RWPE1 (cell line): ENCODE measurements at regions of chr4 and their contacts with region 1.

Region 1: DNA sequence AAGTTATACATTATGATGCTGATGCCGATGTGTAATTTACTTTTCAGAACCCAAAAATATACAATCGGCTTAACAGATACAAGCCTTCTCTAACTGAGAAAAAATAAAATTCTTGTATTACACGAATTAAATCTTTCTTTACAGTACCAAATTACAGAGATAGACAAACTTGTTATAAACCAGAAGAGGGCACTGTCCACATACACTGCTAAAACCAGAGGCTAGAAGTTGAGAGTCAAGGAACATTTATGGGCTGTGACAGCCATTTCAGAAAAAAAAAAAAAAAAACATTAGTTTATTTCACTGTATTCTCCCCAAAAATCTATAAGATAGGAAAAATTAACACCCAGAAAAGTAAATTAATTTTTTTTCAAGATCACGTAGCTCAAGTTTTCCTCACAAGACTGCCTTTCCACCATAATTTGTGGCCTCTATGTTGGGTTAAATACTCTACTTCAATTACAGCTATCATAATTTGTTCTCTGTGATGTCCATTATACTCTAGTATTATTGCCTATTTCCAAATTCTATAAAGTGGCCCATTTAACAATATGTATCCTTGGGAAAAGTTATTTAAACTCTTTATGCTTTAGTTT is 12.0 kb downstream of the EREG start:
- DNase-seq: peak; percentile 62
- H3K27ac ChIP-seq: no peak overlapping the region
- CTCF ChIP-seq: peak; percentile 80

Region 2: DNA sequence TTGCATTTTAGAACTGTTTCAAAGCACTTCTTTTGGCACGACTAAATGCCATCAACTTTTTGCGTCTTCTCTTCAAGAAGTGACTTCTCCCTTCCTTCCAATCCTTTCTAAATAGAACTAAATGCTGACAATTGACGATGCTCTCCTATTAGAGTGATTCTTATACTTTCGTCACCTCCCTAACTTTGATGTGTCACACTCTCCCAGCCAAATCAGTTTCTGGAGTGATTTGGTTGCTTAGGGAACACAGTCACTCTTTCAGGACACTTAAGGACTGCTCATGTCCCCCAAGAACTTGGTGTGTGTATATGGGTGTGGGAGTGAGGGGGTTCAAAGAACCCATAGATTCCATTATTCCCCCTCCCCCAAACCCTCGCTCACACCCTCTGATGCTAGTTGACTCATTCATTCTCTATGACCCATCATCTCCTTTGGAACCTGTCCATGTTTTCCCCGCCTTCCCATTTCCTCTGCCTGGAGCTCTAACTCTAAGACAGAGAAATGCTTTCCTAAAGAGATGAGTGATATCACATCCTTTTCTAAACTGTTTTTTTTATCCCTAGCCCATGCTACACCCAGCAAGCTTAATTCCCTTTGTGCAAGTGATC is 41.2 kb after region 1 on chr4:
- CTCF ChIA-PET with region 1: interaction called, 4 read pairs
- POLR2A ChIA-PET with region 1: interaction called, 16 read pairs
- DNase-seq: peak; percentile 82
- H3K27ac ChIP-seq: peak overlapping the region; percentile 22; the same call in 1 of the 2 replicates
- CTCF ChIP-seq: no peak

Region 3: DNA sequence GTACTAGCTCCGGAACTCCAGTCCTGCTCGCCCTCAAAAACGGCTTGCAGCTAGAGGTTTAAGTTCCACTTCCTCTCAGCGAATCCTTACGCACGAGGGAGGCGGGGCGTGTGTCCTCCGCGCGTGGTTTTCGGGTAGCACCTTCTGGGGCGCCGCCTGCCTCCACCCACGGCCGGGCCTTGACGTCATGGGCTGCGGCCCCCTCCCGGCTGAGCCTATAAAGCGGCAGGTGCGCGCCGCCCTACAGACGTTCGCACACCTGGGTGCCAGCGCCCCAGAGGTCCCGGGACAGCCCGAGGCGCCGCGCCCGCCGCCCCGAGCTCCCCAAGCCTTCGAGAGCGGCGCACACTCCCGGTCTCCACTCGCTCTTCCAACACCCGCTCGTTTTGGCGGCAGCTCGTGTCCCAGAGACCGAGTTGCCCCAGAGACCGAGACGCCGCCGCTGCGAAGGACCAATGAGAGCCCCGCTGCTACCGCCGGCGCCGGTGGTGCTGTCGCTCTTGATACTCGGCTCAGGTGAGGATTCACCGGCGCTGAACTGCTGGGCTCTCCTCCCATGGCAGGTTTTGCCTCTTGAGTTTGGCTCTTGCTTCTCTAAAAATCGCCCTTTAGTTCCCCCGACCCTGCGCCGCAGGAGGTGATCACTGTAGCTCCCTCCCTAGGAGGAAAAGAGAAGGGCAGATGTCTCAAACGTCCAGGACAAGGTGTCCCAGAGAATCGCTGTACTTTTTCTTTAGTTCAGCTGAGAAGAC is 68.1 kb after region 1 on chr4 and contains the start of gene AREG:
- CTCF ChIA-PET with region 1: interaction called, 17 read pairs
- POLR2A ChIA-PET with region 1: interaction called, 6 read pairs
- DNase-seq: peak; percentile 87
- H3K27ac ChIP-seq: peak within 1 kb of the TSS; percentile 96
- CTCF ChIP-seq: peak; percentile 70

Region 4: GRCh38 chr4:74539044-74539790 is 162.2 kb after region 1 on chr4:
- CTCF ChIA-PET with region 1: no interaction called
- POLR2A ChIA-PET with region 1: no interaction called
- DNase-seq: no peak
- H3K27ac ChIP-seq: no peak overlapping the region
- CTCF ChIP-seq: no peak